Caco-2 (cell line): ENCODE measurements at regions of chr10 and their contacts with region 1.

Region 1: GRCh38 chr10:58993480-58994221 is 182.8 kb upstream of the PHYHIPL start:
- DNase-seq: no peak
- H3K4me3 ChIP-seq: no peak overlapping the region
- H3K4me3 Mint-ChIP-seq: peak overlapping the region; percentile 54
- H3K27ac Mint-ChIP-seq: peak overlapping the region; percentile 32
- H3K4me1 ChIP-seq: peaks cover 49% of the 10 kb centered on the region
- H3K4me1 Mint-ChIP-seq: peaks cover 38% of the 10 kb centered on the region
- H3K27me3 ChIP-seq: no peaks in the 10 kb centered on the region
- H3K27me3 Mint-ChIP-seq: no peaks in the 10 kb centered on the region
- CTCF ChIP-seq: no peak

Region 2: GRCh38 chr10:58967551-58968388 is 25.9 kb before region 1 on chr10:
- CTCF ChIA-PET with region 1: no interaction called
- POLR2A ChIA-PET with region 1: no interaction called
- intact Hi-C with region 1: loop called (anchors 1 kb)
- DNase-seq: peak; percentile 89 to 92
- H3K4me3 ChIP-seq: no peak overlapping the region
- H3K4me3 Mint-ChIP-seq: peak overlapping the region; percentile 20
- H3K27ac Mint-ChIP-seq: peak overlapping the region; percentile 14
- H3K4me1 ChIP-seq: peaks cover 31% of the 10 kb centered on the region
- H3K4me1 Mint-ChIP-seq: peaks cover 47% of the 10 kb centered on the region
- H3K27me3 ChIP-seq: no peaks in the 10 kb centered on the region
- H3K27me3 Mint-ChIP-seq: no peaks in the 10 kb centered on the region
- CTCF ChIP-seq: no peak

Region 3: GRCh38 chr10:59006511-59007306 is 13.1 kb after region 1 on chr10:
- CTCF ChIA-PET with region 1: interaction called, 7 read pairs
- POLR2A ChIA-PET with region 1: no interaction called
- intact Hi-C with region 1: loop called (anchors 1 kb)
- DNase-seq: no peak
- H3K4me3 ChIP-seq: no peak overlapping the region
- H3K4me3 Mint-ChIP-seq: peak overlapping the region; percentile 2
- H3K27ac Mint-ChIP-seq: peak overlapping the region; percentile 68
- H3K4me1 ChIP-seq: peaks cover 76% of the 10 kb centered on the region
- H3K4me1 Mint-ChIP-seq: peaks cover 55% of the 10 kb centered on the region
- H3K27me3 ChIP-seq: no peaks in the 10 kb centered on the region
- H3K27me3 Mint-ChIP-seq: no peaks in the 10 kb centered on the region
- CTCF ChIP-seq: no peak

Region 4: DNA sequence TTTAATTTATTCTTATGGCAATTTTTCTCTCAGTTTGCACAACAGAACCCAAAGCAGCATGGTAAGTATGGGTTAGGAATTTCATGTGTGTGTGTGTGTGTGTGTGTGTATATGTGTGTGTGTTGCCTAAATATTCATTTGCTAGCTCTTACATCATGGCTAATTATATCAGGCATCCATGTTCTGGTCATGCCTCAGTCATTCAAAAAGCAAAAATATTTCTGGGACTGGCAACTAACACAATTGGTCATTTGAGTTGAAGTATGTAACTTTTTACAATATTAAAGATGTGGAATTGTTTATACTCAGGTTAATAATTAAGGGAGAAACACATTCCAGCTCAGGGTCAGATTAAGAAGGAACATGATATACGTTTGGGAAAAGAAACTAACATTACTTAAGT is 115.2 kb after region 1 on chr10:
- CTCF ChIA-PET with region 1: no interaction called
- POLR2A ChIA-PET with region 1: no interaction called
- intact Hi-C with region 1: loop called (anchors 1 kb)
- DNase-seq: peak in 1 of 2 experiments; percentile 66
- H3K4me3 ChIP-seq: no peak overlapping the region
- H3K4me3 Mint-ChIP-seq: peak overlapping the region; percentile 34
- H3K27ac Mint-ChIP-seq: peak overlapping the region; percentile 80
- H3K4me1 ChIP-seq: peaks cover 42% of the 10 kb centered on the region
- H3K4me1 Mint-ChIP-seq: peaks cover 41% of the 10 kb centered on the region
- H3K27me3 ChIP-seq: no peaks in the 10 kb centered on the region
- H3K27me3 Mint-ChIP-seq: no peaks in the 10 kb centered on the region
- CTCF ChIP-seq: no peak